ENCODE measurements at regions of chr10 and their contacts with region 1.

Region 1: GRCh38 chr10:51993475-51993874 is 294.1 kb upstream of the CSTF2T start:
- DNase-seq: no peak
- ATAC-seq: no peak
- H3K4me3 ChIP-seq: no peak overlapping the region
- H3K27ac ChIP-seq: no peak overlapping the region
- H3K4me1 ChIP-seq: no peaks in the 10 kb centered on the region
- H3K27me3 ChIP-seq: no peaks in the 10 kb centered on the region
- CTCF ChIP-seq: no peak
- EP300 ChIP-seq: no peak
- POLR2A ChIP-seq: no peak
- RAD21 ChIP-seq: no peak

Region 2: GRCh38 chr10:51960494-51960895 is 33.0 kb before region 1 on chr10:
- CTCF ChIA-PET with region 1: no interaction called
- POLR2A ChIA-PET with region 1: no interaction called
- RAD21 ChIA-PET with region 1: no interaction called
- SMC1A ChIA-PET with region 1: no interaction called
- in situ Hi-C with region 1: no loop called
- intact Hi-C with region 1: no loop called
- DNase-seq: no peak
- ATAC-seq: peak; percentile 71
- H3K4me3 ChIP-seq: no peak overlapping the region
- H3K27ac ChIP-seq: no peak overlapping the region
- H3K4me1 ChIP-seq: no peaks in the 10 kb centered on the region
- H3K27me3 ChIP-seq: no peaks in the 10 kb centered on the region
- CTCF ChIP-seq: peak; percentile 38 to 50 (median 49); a peak in 5 of 6 replicates
- EP300 ChIP-seq: no peak
- POLR2A ChIP-seq: no peak
- RAD21 ChIP-seq: peak; percentile 79

Region 3: GRCh38 chr10:52004342-52004949 is 11.0 kb after region 1 on chr10:
- CTCF ChIA-PET with region 1: interaction called, 11 read pairs
- POLR2A ChIA-PET with region 1: no interaction called
- RAD21 ChIA-PET with region 1: no interaction called
- SMC1A ChIA-PET with region 1: no interaction called
- in situ Hi-C with region 1: no loop called
- intact Hi-C with region 1: no loop called
- DNase-seq: no peak
- ATAC-seq: peak; percentile 61
- H3K4me3 ChIP-seq: no peak overlapping the region
- H3K27ac ChIP-seq: no peak overlapping the region
- H3K4me1 ChIP-seq: no peaks in the 10 kb centered on the region
- H3K27me3 ChIP-seq: no peaks in the 10 kb centered on the region
- CTCF ChIP-seq: peak; percentile 42 to 48 (median 44); a peak in 5 of 6 replicates
- EP300 ChIP-seq: no peak
- POLR2A ChIP-seq: no peak
- RAD21 ChIP-seq: peak; percentile 54

Region 4: DNA sequence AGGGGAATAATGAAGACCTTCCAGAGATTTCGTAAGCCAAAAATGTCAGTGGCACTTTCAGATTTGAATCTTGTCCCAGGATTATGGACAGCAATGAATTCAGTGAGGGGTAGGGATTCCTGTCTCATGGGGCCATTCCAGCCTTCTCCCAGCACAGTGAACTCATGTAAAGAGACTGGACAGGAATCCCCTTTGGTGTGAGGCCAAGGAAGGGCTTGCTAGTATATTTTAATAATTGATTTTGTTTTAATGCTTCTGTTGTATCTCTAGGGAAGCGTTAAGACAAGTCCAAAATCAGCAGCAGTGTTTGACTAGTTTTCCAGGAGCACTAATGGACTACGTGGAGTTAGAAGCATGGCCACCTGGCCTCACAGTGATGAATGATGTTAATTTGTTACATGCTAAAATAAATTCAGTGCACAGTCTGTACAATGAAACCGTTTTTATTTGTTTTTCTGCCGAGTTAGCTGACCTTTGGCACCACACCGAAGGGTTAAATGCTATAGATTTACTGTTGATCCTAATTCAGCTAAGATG is 106.6 kb after region 1 on chr10:
- CTCF ChIA-PET with region 1: no interaction called
- POLR2A ChIA-PET with region 1: no interaction called
- RAD21 ChIA-PET with region 1: no interaction called
- SMC1A ChIA-PET with region 1: no interaction called
- in situ Hi-C with region 1: no loop called
- intact Hi-C with region 1: no loop called
- DNase-seq: no peak
- ATAC-seq: no peak
- H3K4me3 ChIP-seq: no peak overlapping the region
- H3K27ac ChIP-seq: no peak overlapping the region
- H3K4me1 ChIP-seq: no peaks in the 10 kb centered on the region
- H3K27me3 ChIP-seq: no peaks in the 10 kb centered on the region
- CTCF ChIP-seq: no peak
- EP300 ChIP-seq: no peak
- POLR2A ChIP-seq: no peak
- RAD21 ChIP-seq: no peak

Measured in GM12878 (cell line).